ENCODE measurements at regions of chr9 and their contacts with region 1.

Region 1: GRCh38 chr9:94672811-94673487 is 33.6 kb upstream of the FBP1 start:
- DNase-seq: peak in 1 of 2 experiments; percentile 37
- ATAC-seq: no peak
- H3K4me3 ChIP-seq: no peak overlapping the region
- H3K27ac ChIP-seq: peak overlapping the region; percentile 37 to 70; a peak in 5 of 6 replicates
- H3K4me1 ChIP-seq: peaks cover 25% of the 10 kb centered on the region; the same call in 2 of the 3 replicates
- CTCF ChIP-seq: no peak
- EP300 ChIP-seq: no peak
- POLR2A ChIP-seq: no peak
- RAD21 ChIP-seq: no peak

Region 2: GRCh38 chr9:94656200-94656599 is 16.7 kb before region 1 on chr9:
- CTCF ChIA-PET with region 1: interaction called, 34 read pairs
- POLR2A ChIA-PET with region 1: no interaction called
- DNase-seq: no peak
- ATAC-seq: peak in 1 of 2 experiments; percentile 30; a peak in 2 of 6 replicates
- H3K4me3 ChIP-seq: no peak overlapping the region
- H3K27ac ChIP-seq: no peak overlapping the region
- H3K4me1 ChIP-seq: no peaks in the 10 kb centered on the region
- CTCF ChIP-seq: no peak
- EP300 ChIP-seq: no peak
- POLR2A ChIP-seq: no peak
- RAD21 ChIP-seq: no peak

Region 3: GRCh38 chr9:94703488-94704140 is 30.7 kb after region 1 on chr9:
- CTCF ChIA-PET with region 1: no interaction called
- POLR2A ChIA-PET with region 1: no interaction called
- DNase-seq: no peak
- ATAC-seq: no peak
- H3K4me3 ChIP-seq: no peak overlapping the region
- H3K27ac ChIP-seq: no peak overlapping the region
- H3K4me1 ChIP-seq: peaks cover 8% of the 10 kb centered on the region
- CTCF ChIP-seq: no peak
- EP300 ChIP-seq: no peak
- POLR2A ChIP-seq: no peak
- RAD21 ChIP-seq: no peak

Region 4: GRCh38 chr9:94746541-94747370 is 73.8 kb after region 1 on chr9:
- CTCF ChIA-PET with region 1: no interaction called
- POLR2A ChIA-PET with region 1: no interaction called
- DNase-seq: no peak
- ATAC-seq: no peak
- H3K4me3 ChIP-seq: no peak overlapping the region
- H3K27ac ChIP-seq: no peak overlapping the region
- H3K4me1 ChIP-seq: no peaks in the 10 kb centered on the region
- CTCF ChIP-seq: no peak
- EP300 ChIP-seq: no peak
- POLR2A ChIP-seq: no peak
- RAD21 ChIP-seq: no peak

Region 5: GRCh38 chr9:95018099-95018936 is 345.4 kb after region 1 on chr9:
- CTCF ChIA-PET with region 1: interaction called, 10 read pairs
- POLR2A ChIA-PET with region 1: interaction called, 5 read pairs
- DNase-seq: peak; percentile 65 to 87
- ATAC-seq: peak; percentile 65 to 80
- H3K4me3 ChIP-seq: peak overlapping the region; percentile 22; the same call in 2 of the 3 replicates
- H3K27ac ChIP-seq: peak overlapping the region; percentile 86 to 99
- H3K4me1 ChIP-seq: peaks cover 99% of the 10 kb centered on the region
- CTCF ChIP-seq: no peak
- EP300 ChIP-seq: peak; percentile 22 to 54; a peak in 2 of 5 replicates
- POLR2A ChIP-seq: peak; percentile 17; the same call in 1 of the 2 replicates
- RAD21 ChIP-seq: 0 out of 5 replicates have a peak, but pooled peaks of 1 of the 2 experiments have one; percentile 15

Region 6: DNA sequence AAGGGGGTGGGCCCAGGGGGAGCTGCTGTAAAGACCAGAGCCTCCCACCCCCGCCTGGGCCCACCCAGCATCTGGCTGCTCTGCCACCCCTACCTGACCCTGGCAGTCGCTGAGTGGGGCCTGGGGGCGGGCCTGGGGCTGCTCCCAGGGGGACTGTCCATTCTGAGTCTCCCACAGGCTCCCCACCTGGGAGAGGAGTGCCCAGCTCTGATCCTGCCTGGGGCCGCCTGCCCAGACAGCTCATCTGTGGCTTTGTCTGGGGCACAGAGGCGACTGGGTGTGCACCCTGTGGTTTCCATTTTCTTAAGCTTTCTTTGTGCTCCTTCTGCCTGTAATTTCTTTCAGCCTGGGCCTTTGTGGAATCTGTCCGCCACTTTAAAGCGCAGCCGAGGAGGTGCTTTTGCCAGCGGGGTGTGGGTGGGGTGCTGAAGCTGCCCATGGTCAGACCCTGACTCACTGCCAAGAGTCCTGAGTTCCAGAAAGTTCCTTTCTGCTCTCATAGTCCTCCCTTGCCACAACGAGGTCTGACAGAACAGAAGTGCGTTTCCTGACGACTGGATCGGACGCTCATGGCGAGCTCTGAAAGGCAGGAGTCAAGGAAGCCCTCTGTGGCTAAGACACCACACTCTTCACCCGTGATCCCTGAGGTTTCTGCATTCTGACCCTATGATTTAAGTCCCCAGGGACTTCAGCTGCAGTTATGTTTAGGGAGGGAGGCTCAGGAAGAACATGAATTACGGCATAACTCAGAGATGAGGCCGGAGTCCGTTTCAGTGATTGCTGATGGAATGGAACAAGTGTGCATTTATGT is 419.5 kb after region 1 on chr9:
- CTCF ChIA-PET with region 1: interaction called, 11 read pairs
- POLR2A ChIA-PET with region 1: interaction called, 5 read pairs
- DNase-seq: no peak
- ATAC-seq: peak; percentile 6 to 12; a peak in 5 of 6 replicates
- H3K4me3 ChIP-seq: no peak overlapping the region
- H3K27ac ChIP-seq: peak overlapping the region; percentile 63 to 78
- H3K4me1 ChIP-seq: peaks cover 68% of the 10 kb centered on the region
- CTCF ChIP-seq: no peak
- EP300 ChIP-seq: no peak
- POLR2A ChIP-seq: no peak
- RAD21 ChIP-seq: no peak

Region 7: DNA sequence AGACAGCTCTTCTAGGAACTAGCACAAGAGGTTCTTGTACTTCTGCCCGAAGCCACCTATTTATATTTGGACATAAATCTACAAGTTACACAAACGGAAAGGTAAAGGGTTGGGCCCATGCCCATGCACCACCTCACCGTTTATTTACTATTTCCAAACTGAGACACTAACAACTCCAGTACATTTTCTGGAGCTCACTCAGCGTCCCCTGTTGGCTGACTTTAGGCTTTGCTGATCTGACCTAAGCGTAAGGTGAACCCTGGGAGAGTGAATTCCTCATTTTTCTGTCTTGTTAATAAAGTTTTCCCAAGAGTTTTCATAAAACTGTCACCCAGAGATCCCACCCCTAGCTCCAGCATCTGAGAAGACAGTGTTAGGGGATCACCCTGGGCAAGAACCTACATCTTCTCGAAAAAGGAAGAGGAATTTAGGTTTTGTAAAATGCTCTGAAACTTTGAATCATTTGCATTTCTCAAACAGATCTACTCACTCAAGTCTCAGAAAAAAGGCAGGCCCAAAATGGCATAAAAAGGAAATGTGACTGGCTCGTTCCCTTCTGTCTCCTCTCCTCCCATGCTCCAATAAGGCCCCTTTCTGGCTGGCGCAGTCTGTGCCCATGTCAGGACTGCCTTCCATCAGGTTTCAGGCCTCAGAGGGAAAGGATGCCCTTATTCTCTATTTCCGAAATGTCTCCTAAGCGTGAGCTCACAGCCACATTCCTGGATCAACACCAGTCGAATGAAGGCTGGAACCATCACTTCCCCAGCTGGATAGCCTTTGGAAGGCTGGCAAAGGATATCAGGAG is 443.3 kb after region 1 on chr9:
- CTCF ChIA-PET with region 1: interaction called, 13 read pairs
- POLR2A ChIA-PET with region 1: no interaction called
- DNase-seq: peak in 1 of 2 experiments; percentile 47
- ATAC-seq: peak; percentile 45 to 63; a peak in 4 of 6 replicates
- H3K4me3 ChIP-seq: no peak overlapping the region
- H3K27ac ChIP-seq: peak overlapping the region in 1 of 2 experiments; percentile 25; a peak in 2 of 6 replicates
- H3K4me1 ChIP-seq: no peaks in the 10 kb centered on the region
- CTCF ChIP-seq: peak; percentile 30; the same call in 2 of the 3 replicates
- EP300 ChIP-seq: no peak
- POLR2A ChIP-seq: no peak
- RAD21 ChIP-seq: peak; percentile 33 to 59; a peak in 3 of 5 replicates

Region 8: GRCh38 chr9:95556521-95556920 is 883.6 kb after region 1 on chr9:
- CTCF ChIA-PET with region 1: no interaction called
- POLR2A ChIA-PET with region 1: interaction called, 10 read pairs
- DNase-seq: no peak
- ATAC-seq: no peak
- H3K4me3 ChIP-seq: no peak overlapping the region
- H3K27ac ChIP-seq: no peak overlapping the region
- H3K4me1 ChIP-seq: no peaks in the 10 kb centered on the region
- CTCF ChIP-seq: no peak
- EP300 ChIP-seq: no peak
- POLR2A ChIP-seq: no peak
- RAD21 ChIP-seq: no peak

Region 9: DNA sequence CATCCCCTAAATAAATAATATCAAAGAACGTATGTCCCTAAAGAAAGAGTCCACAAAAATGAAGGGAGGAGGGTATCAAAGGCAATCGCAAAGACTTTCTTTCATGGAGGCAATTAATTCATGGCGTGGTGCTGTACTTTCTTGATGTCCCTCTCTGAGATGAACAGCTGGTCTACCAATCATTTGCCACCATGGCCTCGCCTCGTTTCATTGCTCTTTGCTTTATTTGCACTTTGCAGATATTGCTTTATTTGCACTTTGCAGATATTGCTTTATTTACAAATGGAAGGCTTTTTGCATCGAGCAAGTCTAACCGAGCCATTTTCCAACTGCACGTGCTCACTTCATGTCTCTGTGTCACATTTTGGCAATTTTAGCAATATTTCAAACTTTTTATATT is 947.8 kb after region 1 on chr9:
- CTCF ChIA-PET with region 1: no interaction called
- POLR2A ChIA-PET with region 1: interaction called, 12 read pairs
- DNase-seq: no peak
- ATAC-seq: no peak
- H3K4me3 ChIP-seq: no peak overlapping the region
- H3K27ac ChIP-seq: no peak overlapping the region
- H3K4me1 ChIP-seq: no peaks in the 10 kb centered on the region
- CTCF ChIP-seq: no peak
- EP300 ChIP-seq: no peak
- POLR2A ChIP-seq: no peak
- RAD21 ChIP-seq: no peak

Measured in A549 (cell line).